Endothelial cell of umbilical vein (primary cell): ENCODE measurements at regions of chr2 and their contacts with region 1.

Region 1: GRCh38 chr2:25606892-25607291 is 66.5 kb downstream of the DTNB start:
- DNase-seq: peak; percentile 55
- H3K4me3 ChIP-seq: no peak overlapping the region
- H3K27ac ChIP-seq: no peak overlapping the region
- H3K4me1 ChIP-seq: peaks cover 2% of the 10 kb centered on the region
- H3K27me3 ChIP-seq: no peaks in the 10 kb centered on the region
- CTCF ChIP-seq: peak; percentile 23 to 40
- POLR2A ChIP-seq: no peak

Region 2: DNA sequence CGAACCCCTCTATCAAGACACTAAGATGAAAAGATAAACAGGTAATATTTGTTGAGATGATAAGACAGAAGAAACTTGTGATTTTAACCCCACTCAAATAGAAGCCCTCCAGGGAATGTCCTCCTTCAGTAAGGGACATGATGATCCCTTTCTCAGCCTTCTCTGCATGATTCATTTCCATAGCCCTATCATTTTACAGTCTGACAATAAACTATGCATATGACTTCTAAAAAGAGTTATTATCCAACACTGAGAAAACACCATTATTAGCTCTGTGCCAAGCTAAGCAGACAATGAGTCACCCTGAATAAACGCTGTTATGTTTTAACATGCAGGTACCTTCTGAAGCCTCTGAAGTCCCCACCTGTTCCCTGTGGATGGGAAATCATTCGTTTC is 11.7 kb after region 1 on chr2:
- CTCF ChIA-PET with region 1: interaction called, 61 read pairs
- POLR2A ChIA-PET with region 1: no interaction called
- dilution Hi-C with region 1: no loop called
- intact Hi-C with region 1: no loop called
- DNase-seq: peak; percentile 97
- H3K4me3 ChIP-seq: peak overlapping the region in 2 of 3 experiments; percentile 34 to 65
- H3K27ac ChIP-seq: peak overlapping the region; percentile 99
- H3K4me1 ChIP-seq: peaks cover 45% of the 10 kb centered on the region
- H3K27me3 ChIP-seq: no peaks in the 10 kb centered on the region
- CTCF ChIP-seq: no peak
- POLR2A ChIP-seq: no peak

Region 3: DNA sequence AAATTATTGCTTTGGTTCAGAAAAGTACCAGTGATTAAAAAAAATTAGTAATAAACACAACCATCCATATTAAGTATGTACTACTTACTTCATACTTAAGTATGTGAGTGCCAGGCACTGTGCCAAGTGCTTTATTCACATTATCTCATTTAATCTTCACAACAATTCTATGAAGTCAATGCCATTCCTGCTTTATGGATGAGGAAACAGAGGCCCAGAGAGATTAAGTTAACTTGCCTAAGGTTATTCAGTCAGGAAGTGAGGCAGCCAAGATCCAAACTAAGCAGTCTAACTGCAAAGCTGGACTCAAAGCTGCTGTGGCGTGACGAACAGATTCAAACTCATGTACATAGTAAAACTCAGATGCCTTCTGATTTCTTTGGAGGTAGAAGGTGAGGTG is 44.2 kb after region 1 on chr2:
- CTCF ChIA-PET with region 1: interaction called, 21 read pairs
- POLR2A ChIA-PET with region 1: no interaction called
- dilution Hi-C with region 1: no loop called
- intact Hi-C with region 1: no loop called
- DNase-seq: peak; percentile 96
- H3K4me3 ChIP-seq: no peak overlapping the region
- H3K27ac ChIP-seq: peak overlapping the region; percentile 87
- H3K4me1 ChIP-seq: peaks cover 21% of the 10 kb centered on the region
- H3K27me3 ChIP-seq: no peaks in the 10 kb centered on the region
- CTCF ChIP-seq: no peak
- POLR2A ChIP-seq: no peak

Region 4: DNA sequence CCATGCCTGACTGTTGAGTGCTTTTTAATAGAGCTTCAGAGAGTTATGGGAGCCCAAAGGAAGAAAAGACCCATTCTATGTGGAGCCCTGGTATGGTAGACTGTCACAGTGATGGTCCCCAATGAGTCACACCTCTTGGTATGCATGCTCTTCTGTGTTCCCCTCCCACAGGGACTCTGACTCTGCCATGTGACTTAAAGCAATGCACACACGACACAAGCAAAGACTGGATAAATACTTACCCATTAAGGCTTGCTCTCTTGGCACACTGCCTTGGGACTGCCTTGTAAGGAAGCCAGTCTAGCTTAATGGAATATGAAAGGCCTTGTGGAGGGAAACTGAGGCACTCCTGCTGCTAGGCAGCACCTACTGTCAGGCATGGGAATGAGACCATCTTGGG is 83.2 kb after region 1 on chr2:
- CTCF ChIA-PET with region 1: interaction called, 16 read pairs
- POLR2A ChIA-PET with region 1: no interaction called
- dilution Hi-C with region 1: no loop called
- intact Hi-C with region 1: no loop called
- DNase-seq: no peak
- H3K4me3 ChIP-seq: no peak overlapping the region
- H3K27ac ChIP-seq: no peak overlapping the region
- H3K4me1 ChIP-seq: no peaks in the 10 kb centered on the region
- H3K27me3 ChIP-seq: peaks cover 3 to 4% of the 10 kb centered on the region in 2 experiments
- CTCF ChIP-seq: no peak
- POLR2A ChIP-seq: no peak

Region 5: DNA sequence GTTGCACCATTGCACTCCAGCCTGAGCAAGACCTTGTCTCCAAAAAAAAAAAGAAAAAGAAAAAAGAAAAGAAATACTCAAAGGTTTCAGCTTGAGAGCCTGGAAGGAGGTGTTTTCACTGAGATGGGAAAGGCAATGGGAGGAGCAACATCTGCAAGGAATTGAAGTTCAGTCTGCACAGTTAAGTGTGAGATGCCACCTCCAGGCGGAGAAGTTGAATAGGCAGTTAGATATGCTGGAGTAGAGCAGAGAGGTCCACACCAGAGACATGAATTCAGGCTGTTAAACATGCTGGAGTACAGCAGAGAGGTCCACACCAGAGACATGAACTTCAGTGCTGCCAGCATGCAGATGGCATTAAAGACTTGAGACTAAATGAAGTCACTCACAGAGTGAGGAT is 107.8 kb after region 1 on chr2:
- CTCF ChIA-PET with region 1: interaction called, 11 read pairs
- POLR2A ChIA-PET with region 1: no interaction called
- dilution Hi-C with region 1: no loop called
- intact Hi-C with region 1: no loop called
- DNase-seq: no peak
- H3K4me3 ChIP-seq: no peak overlapping the region
- H3K27ac ChIP-seq: no peak overlapping the region
- H3K4me1 ChIP-seq: no peaks in the 10 kb centered on the region
- H3K27me3 ChIP-seq: peaks cover 3 to 5% of the 10 kb centered on the region in 2 experiments
- CTCF ChIP-seq: no peak
- POLR2A ChIP-seq: no peak

Region 6: GRCh38 chr2:25903216-25903776 is 296.4 kb after region 1 on chr2:
- CTCF ChIA-PET with region 1: no interaction called
- POLR2A ChIA-PET with region 1: no interaction called
- dilution Hi-C with region 1: no loop called
- intact Hi-C with region 1: no loop called
- DNase-seq: no peak
- H3K4me3 ChIP-seq: no peak overlapping the region
- H3K27ac ChIP-seq: no peak overlapping the region
- H3K4me1 ChIP-seq: no peaks in the 10 kb centered on the region
- H3K27me3 ChIP-seq: peaks cover 0 to 5% of the 10 kb centered on the region in 2 experiments
- CTCF ChIP-seq: no peak
- POLR2A ChIP-seq: no peak